ENCODE measurements at regions of chr12 and their contacts with region 1.

Region 1: GRCh38 chr12:45388545-45388944 is 172.7 kb downstream of the ANO6 start:
- DNase-seq: peak; percentile 11
- H3K4me3 Mint-ChIP-seq: no peak overlapping the region
- H3K27ac Mint-ChIP-seq: no peak overlapping the region
- H3K4me1 Mint-ChIP-seq: no peaks in the 10 kb centered on the region
- H3K27me3 Mint-ChIP-seq: no peaks in the 10 kb centered on the region

Region 2: GRCh38 chr12:45170456-45171042 is 218.0 kb before region 1 on chr12:
- CTCF ChIA-PET with region 1: interaction called, 17 read pairs
- POLR2A ChIA-PET with region 1: no interaction called
- intact Hi-C with region 1: loop called (anchors 5 kb)
- DNase-seq: peak; percentile 84
- H3K4me3 Mint-ChIP-seq: no peak overlapping the region
- H3K27ac Mint-ChIP-seq: no peak overlapping the region
- H3K4me1 Mint-ChIP-seq: no peaks in the 10 kb centered on the region
- H3K27me3 Mint-ChIP-seq: no peaks in the 10 kb centered on the region

Measured in activated CD4-positive, alpha-beta memory T cell treated with anti-CD3 and anti-CD28 coated beads for 36 hours (primary cell).